B cell (primary cell): ENCODE measurements at regions of chr6 and their contacts with region 1.

Region 1: DNA sequence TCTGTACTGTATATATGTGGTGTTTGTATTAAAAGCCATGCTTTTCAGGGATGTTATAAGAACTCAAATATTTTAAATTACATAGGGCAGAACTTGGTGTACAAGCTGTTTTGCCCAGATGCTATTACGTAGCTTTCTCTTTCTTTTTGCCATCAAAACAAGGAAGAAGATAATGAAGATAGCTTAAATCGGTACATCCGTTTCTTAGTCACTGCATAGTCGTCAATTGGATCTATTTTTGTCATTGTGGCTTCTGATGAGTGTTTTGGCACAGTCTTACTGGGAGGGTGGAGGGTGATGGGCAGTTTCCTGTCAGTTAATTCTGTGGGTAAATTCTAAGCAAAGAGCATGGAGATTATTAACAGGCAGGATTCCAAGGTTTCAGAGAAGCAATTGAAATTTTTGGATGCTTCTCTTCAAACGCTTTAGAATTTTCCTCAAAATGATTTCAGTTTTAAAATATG is 649.1 kb upstream of the GJE1 start:
- DNase-seq: peak; percentile 87
- ATAC-seq: peak; percentile 84
- H3K4me3 ChIP-seq: peak overlapping the region; percentile 27 to 74 (median 40)
- H3K4me3 Mint-ChIP-seq: peak overlapping the region; percentile 67
- H3K27ac ChIP-seq: peak overlapping the region; percentile 91 to 94
- H3K27ac Mint-ChIP-seq: peak overlapping the region; percentile 82
- H3K4me1 ChIP-seq: peaks cover 27 to 38% of the 10 kb centered on the region in 2 donors
- H3K4me1 Mint-ChIP-seq: peaks cover 46% of the 10 kb centered on the region
- H3K27me3 ChIP-seq: no peaks in the 10 kb centered on the region
- H3K27me3 Mint-ChIP-seq: no peaks in the 10 kb centered on the region
- CTCF ChIP-seq: no peak

Region 2: DNA sequence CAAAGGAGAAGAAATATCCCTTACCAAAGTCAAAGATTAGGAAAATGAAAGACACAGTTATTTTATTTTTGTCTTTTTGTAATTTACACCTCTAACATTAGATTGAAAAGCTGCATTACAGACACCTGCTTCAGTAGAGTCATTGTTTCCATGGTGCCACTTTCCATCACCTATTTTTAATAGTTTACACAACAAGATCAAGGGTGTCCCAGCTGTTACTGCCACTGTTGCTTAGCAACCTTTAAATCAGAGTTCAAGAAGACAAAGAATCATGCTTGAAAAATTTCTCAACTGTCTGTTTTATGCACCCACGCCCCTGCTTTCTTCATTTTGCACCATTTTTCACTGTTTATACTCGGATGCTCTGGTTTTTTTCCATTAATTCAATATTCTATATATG is 19.1 kb before region 1 on chr6:
- CTCF ChIA-PET with region 1: interaction called, 6 read pairs
- POLR2A ChIA-PET with region 1: no interaction called
- intact Hi-C with region 1: loop called (anchors 2 kb)
- DNase-seq: peak; percentile 35
- ATAC-seq: peak; percentile 39
- H3K4me3 ChIP-seq: no peak overlapping the region
- H3K4me3 Mint-ChIP-seq: no peak overlapping the region
- H3K27ac ChIP-seq: no peak overlapping the region
- H3K27ac Mint-ChIP-seq: no peak overlapping the region
- H3K4me1 ChIP-seq: peaks cover 4% of the 10 kb centered on the region in 2 donors
- H3K4me1 Mint-ChIP-seq: peaks cover 9% of the 10 kb centered on the region
- H3K27me3 ChIP-seq: no peaks in the 10 kb centered on the region
- H3K27me3 Mint-ChIP-seq: no peaks in the 10 kb centered on the region
- CTCF ChIP-seq: no peak

Region 3: GRCh38 chr6:141498977-141499376 is 15.3 kb after region 1 on chr6:
- CTCF ChIA-PET with region 1: interaction called, 9 read pairs
- POLR2A ChIA-PET with region 1: interaction called, 3 read pairs
- intact Hi-C with region 1: loop called (anchors 1 kb)
- DNase-seq: no peak
- ATAC-seq: no peak
- H3K4me3 ChIP-seq: no peak overlapping the region
- H3K4me3 Mint-ChIP-seq: no peak overlapping the region
- H3K27ac ChIP-seq: no peak overlapping the region
- H3K27ac Mint-ChIP-seq: no peak overlapping the region
- H3K4me1 ChIP-seq: peaks cover 8 to 9% of the 10 kb centered on the region in 2 donors
- H3K4me1 Mint-ChIP-seq: peaks cover 13% of the 10 kb centered on the region
- H3K27me3 ChIP-seq: no peaks in the 10 kb centered on the region
- H3K27me3 Mint-ChIP-seq: no peaks in the 10 kb centered on the region
- CTCF ChIP-seq: no peak

Region 4: DNA sequence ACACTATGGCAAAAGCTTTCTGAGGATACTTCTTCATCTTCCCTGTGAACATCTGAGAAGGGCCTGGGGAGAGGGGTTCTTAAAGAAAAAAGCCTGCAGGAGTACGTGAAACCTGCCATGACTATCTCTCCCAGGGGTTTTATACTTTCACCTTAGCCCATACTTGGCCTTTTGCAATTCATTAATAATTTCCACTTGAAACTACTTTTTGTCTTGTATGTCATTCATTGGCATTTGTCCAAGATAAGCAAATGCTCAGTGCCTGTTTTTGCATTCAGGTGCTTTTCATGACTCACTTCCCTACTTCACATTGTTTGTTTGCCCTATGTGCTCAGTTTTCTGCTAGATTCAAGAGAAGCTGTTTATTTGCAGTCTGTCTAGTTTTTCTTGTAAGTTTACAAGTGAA is 68.8 kb after region 1 on chr6:
- CTCF ChIA-PET with region 1: interaction called, 3 read pairs
- POLR2A ChIA-PET with region 1: interaction called, 3 read pairs
- intact Hi-C with region 1: loop called (anchors 1 kb)
- DNase-seq: peak; percentile 13
- ATAC-seq: peak; percentile 44
- H3K4me3 ChIP-seq: no peak overlapping the region
- H3K4me3 Mint-ChIP-seq: no peak overlapping the region
- H3K27ac ChIP-seq: no peak overlapping the region
- H3K27ac Mint-ChIP-seq: no peak overlapping the region
- H3K4me1 ChIP-seq: peaks cover 4 to 9% of the 10 kb centered on the region in 2 donors
- H3K4me1 Mint-ChIP-seq: peaks cover 15% of the 10 kb centered on the region
- H3K27me3 ChIP-seq: no peaks in the 10 kb centered on the region
- H3K27me3 Mint-ChIP-seq: peaks cover 4% of the 10 kb centered on the region
- CTCF ChIP-seq: no peak

Region 5: DNA sequence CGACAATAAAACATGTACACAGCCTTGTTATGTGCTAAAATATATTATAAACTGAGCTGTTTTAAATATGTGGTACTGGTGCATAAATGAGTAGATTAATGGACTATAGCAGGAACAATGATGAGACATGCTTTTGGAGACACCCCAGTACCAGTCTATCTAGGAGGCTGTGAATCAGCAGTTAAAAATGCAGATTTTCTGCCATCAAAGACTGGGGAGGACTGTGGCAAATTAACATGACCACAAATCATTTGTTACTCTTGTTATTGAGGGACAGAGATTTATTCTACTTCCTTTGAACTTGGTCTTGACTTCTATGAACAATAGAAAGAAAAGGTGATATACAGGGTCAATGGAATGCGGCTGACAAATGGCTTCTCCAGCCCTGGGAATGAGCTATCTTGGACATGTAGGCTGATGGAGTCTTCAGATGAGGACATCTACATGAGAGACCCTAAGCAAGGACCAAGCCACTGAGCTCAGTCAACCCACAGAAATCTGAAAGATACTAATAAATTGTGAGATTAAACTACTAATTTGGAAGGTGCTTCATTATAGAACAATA is 97.4 kb after region 1 on chr6:
- CTCF ChIA-PET with region 1: no interaction called
- POLR2A ChIA-PET with region 1: no interaction called
- intact Hi-C with region 1: no loop called
- DNase-seq: no peak
- ATAC-seq: no peak
- H3K4me3 ChIP-seq: no peak overlapping the region
- H3K4me3 Mint-ChIP-seq: no peak overlapping the region
- H3K27ac ChIP-seq: no peak overlapping the region
- H3K27ac Mint-ChIP-seq: no peak overlapping the region
- H3K4me1 ChIP-seq: no peaks in the 10 kb centered on the region
- H3K4me1 Mint-ChIP-seq: no peaks in the 10 kb centered on the region
- H3K27me3 ChIP-seq: no peaks in the 10 kb centered on the region
- H3K27me3 Mint-ChIP-seq: no peaks in the 10 kb centered on the region
- CTCF ChIP-seq: no peak